Endothelial cell of umbilical vein (primary cell): ENCODE measurements at regions of chr7 and their contacts with region 1.

Region 1: DNA sequence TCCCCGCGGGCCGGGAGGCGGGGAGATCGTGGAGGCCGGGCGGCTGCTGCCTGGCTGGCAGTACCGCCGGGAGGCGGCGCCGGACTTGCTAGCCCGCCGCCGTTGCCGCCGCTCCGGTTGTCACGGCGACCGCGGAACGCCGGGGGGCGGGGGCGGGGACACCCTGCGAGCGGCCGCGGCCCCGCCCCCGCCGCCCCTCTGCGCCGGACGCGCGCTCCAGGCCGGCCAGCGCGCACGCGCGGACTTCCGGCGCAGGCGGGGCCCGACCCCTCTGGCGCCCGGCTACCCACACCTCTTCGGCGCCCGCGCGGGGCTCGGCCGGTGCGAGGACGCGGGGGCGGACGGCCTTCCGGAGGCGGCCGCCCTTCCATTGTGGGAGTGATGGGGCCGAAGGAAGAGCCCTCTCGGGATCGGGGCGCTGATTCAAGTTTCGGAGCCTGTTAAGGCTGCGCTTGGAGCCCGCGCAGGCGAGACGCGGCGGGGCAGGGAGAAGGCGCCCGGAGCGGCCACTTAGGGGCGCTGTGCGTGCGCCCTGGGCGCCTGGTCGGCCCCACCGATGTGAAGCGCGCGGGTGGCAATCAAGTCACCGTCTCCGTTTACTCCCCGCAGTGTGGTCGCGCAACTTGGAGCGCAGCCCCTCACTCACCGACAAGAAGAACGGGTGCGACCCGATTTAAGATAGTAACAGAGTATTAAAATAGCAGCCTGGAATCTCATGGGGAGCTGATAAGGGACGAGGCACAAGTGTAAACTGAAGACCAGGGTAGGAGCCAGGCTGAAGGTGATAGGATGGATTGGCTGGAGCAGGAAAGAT is 448 bp upstream of the DPY19L1 start:
- DNase-seq: peak; percentile 89
- H3K4me3 ChIP-seq: peak overlapping the region; percentile 45 to 71 (median 66)
- H3K27ac ChIP-seq: peak overlapping the region; percentile 75
- H3K4me1 ChIP-seq: peaks cover 27% of the 10 kb centered on the region
- H3K27me3 ChIP-seq: no peaks in the 10 kb centered on the region
- CTCF ChIP-seq: peak; percentile 87 to 93
- POLR2A ChIP-seq: no peak

Region 2: GRCh38 chr7:34675749-34676374 is 361.9 kb before region 1 on chr7:
- CTCF ChIA-PET with region 1: no interaction called
- POLR2A ChIA-PET with region 1: no interaction called
- dilution Hi-C with region 1: no loop called
- intact Hi-C with region 1: loop called (anchors 5 kb)
- DNase-seq: peak; percentile 51
- H3K4me3 ChIP-seq: no peak overlapping the region
- H3K27ac ChIP-seq: no peak overlapping the region
- H3K4me1 ChIP-seq: no peaks in the 10 kb centered on the region
- H3K27me3 ChIP-seq: no peaks in the 10 kb centered on the region
- CTCF ChIP-seq: peak; percentile 63
- POLR2A ChIP-seq: no peak

Region 3: GRCh38 chr7:34823640-34824258 is 214.0 kb before region 1 on chr7:
- CTCF ChIA-PET with region 1: interaction called, 18 read pairs
- POLR2A ChIA-PET with region 1: interaction called, 3 read pairs
- dilution Hi-C with region 1: no loop called
- intact Hi-C with region 1: loop called (anchors 1 kb)
- DNase-seq: peak; percentile 45
- H3K4me3 ChIP-seq: no peak overlapping the region
- H3K27ac ChIP-seq: no peak overlapping the region
- H3K4me1 ChIP-seq: no peaks in the 10 kb centered on the region
- H3K27me3 ChIP-seq: peaks cover 0 to 1% of the 10 kb centered on the region in 2 experiments
- CTCF ChIP-seq: peak; percentile 76 to 78
- POLR2A ChIP-seq: no peak

Region 4: GRCh38 chr7:34900891-34901513 is 136.7 kb before region 1 on chr7:
- CTCF ChIA-PET with region 1: no interaction called
- POLR2A ChIA-PET with region 1: no interaction called
- dilution Hi-C with region 1: no loop called
- intact Hi-C with region 1: no loop called
- DNase-seq: peak; percentile 5
- H3K4me3 ChIP-seq: no peak overlapping the region
- H3K27ac ChIP-seq: no peak overlapping the region
- H3K4me1 ChIP-seq: no peaks in the 10 kb centered on the region
- H3K27me3 ChIP-seq: peaks cover 0 to 2% of the 10 kb centered on the region in 2 experiments
- CTCF ChIP-seq: peak; percentile 22 to 29
- POLR2A ChIP-seq: no peak

Region 5: GRCh38 chr7:34928049-34928448 is 109.7 kb before region 1 on chr7:
- CTCF ChIA-PET with region 1: no interaction called
- POLR2A ChIA-PET with region 1: no interaction called
- dilution Hi-C with region 1: no loop called
- intact Hi-C with region 1: loop called (anchors 5 kb)
- DNase-seq: no peak
- H3K4me3 ChIP-seq: no peak overlapping the region
- H3K27ac ChIP-seq: no peak overlapping the region
- H3K4me1 ChIP-seq: no peaks in the 10 kb centered on the region
- H3K27me3 ChIP-seq: no peaks in the 10 kb centered on the region
- CTCF ChIP-seq: peak; percentile 32 to 44
- POLR2A ChIP-seq: no peak

Region 6: DNA sequence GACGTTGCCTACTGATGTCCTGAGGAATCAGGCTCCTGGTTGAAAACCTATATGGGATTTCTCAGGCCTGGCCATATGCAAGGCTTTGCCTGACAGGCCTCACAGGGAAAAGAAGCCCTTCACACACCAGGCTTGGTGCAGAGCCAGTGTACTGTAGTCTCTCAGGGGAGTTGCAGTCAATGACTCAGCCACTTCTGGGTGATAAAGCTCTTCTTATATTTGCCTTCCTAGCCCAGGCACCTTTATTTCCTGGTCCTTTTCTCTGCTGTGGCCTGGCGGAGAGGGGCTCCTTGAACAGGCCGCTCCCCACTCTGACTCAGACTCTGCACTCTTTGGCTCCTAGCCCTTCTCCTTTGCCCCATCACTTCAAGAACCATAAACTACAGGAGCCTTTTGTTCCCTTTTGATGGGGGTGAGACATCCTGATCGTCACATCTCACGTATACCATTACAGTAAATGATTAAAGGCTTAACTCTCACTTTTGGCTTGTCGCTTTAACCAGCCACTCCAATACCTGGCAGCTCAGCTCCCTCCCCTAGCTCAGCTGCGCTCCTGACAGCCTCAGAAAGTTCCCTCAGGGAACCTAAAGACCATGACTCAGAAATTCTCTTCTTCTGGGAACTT is 33.9 kb before region 1 on chr7:
- CTCF ChIA-PET with region 1: interaction called, 9 read pairs
- POLR2A ChIA-PET with region 1: no interaction called
- dilution Hi-C with region 1: no loop called
- intact Hi-C with region 1: loop called (anchors 1 kb)
- DNase-seq: peak; percentile 73
- H3K4me3 ChIP-seq: no peak overlapping the region
- H3K27ac ChIP-seq: peak overlapping the region; percentile 85
- H3K4me1 ChIP-seq: peaks cover 24% of the 10 kb centered on the region
- H3K27me3 ChIP-seq: no peaks in the 10 kb centered on the region
- CTCF ChIP-seq: no peak
- POLR2A ChIP-seq: no peak

Region 7: GRCh38 chr7:35537067-35538023 is 499.6 kb after region 1 on chr7:
- CTCF ChIA-PET with region 1: no interaction called
- POLR2A ChIA-PET with region 1: no interaction called
- dilution Hi-C with region 1: no loop called
- intact Hi-C with region 1: loop called (anchors 1 kb)
- DNase-seq: peak; percentile 70
- H3K4me3 ChIP-seq: peak overlapping the region in 1 of 3 experiments; percentile 28
- H3K27ac ChIP-seq: no peak overlapping the region
- H3K4me1 ChIP-seq: no peaks in the 10 kb centered on the region
- H3K27me3 ChIP-seq: peaks cover 0 to 5% of the 10 kb centered on the region in 2 experiments
- CTCF ChIP-seq: peak; percentile 92 to 99
- POLR2A ChIP-seq: no peak